ENCODE measurements at regions of chr3 and their contacts with region 1.

Region 1: DNA sequence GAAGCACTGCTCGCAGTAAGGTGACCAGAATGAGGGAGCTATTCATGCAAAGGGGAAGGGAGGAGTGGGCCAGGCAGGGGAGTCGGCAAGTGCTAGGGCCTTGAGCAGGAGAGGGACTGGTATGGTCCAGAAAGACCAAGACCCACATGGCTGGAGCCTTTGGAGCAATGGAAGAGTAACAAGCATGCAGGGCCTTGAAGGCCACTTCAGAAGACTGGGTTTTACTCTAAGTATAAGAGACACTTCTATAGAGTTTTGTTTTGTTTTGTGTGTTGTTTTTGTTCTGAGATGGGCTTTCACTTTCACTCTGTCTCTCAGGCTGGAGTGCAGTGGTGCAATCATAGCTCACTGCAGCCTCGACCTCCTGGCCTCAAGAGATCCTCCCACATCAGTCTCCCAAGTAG is 42.0 kb downstream of the BFSP2 start:
- DNase-seq: peak; percentile 79
- H3K4me3 Mint-ChIP-seq: peak overlapping the region; percentile 81
- H3K27ac Mint-ChIP-seq: peak overlapping the region; percentile 95
- H3K4me1 Mint-ChIP-seq: peaks cover 32% of the 10 kb centered on the region
- H3K27me3 Mint-ChIP-seq: no peaks in the 10 kb centered on the region

Region 2: GRCh38 chr3:133209871-133210550 is 231.9 kb before region 1 on chr3:
- intact Hi-C with region 1: loop called (anchors 1 kb)
- DNase-seq: no peak
- H3K4me3 Mint-ChIP-seq: no peak overlapping the region
- H3K27ac Mint-ChIP-seq: peak overlapping the region; percentile 8
- H3K4me1 Mint-ChIP-seq: peaks cover 18% of the 10 kb centered on the region
- H3K27me3 Mint-ChIP-seq: peaks cover 13% of the 10 kb centered on the region

Region 3: DNA sequence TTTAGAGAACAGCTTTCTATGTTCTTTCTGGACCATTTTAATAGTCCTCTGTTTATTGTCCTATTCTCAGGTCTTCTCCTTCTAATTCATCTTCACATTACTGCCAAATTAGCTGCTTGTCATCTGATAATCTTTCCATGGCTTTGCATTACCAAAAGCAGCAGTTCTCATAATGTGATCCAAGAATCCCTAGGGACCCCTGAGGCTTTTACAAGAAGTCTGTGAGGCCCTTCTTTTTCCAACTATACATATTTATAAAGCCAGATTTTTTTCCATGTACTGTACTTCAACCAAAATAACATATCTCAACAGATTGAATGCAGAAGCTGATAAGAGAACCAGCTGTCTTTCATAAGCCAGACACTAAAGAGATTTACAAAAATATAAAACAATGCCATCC is 204.5 kb before region 1 on chr3:
- intact Hi-C with region 1: no loop called
- DNase-seq: no peak
- H3K4me3 Mint-ChIP-seq: no peak overlapping the region
- H3K27ac Mint-ChIP-seq: no peak overlapping the region
- H3K4me1 Mint-ChIP-seq: no peaks in the 10 kb centered on the region
- H3K27me3 Mint-ChIP-seq: peaks cover 6% of the 10 kb centered on the region

Region 4: DNA sequence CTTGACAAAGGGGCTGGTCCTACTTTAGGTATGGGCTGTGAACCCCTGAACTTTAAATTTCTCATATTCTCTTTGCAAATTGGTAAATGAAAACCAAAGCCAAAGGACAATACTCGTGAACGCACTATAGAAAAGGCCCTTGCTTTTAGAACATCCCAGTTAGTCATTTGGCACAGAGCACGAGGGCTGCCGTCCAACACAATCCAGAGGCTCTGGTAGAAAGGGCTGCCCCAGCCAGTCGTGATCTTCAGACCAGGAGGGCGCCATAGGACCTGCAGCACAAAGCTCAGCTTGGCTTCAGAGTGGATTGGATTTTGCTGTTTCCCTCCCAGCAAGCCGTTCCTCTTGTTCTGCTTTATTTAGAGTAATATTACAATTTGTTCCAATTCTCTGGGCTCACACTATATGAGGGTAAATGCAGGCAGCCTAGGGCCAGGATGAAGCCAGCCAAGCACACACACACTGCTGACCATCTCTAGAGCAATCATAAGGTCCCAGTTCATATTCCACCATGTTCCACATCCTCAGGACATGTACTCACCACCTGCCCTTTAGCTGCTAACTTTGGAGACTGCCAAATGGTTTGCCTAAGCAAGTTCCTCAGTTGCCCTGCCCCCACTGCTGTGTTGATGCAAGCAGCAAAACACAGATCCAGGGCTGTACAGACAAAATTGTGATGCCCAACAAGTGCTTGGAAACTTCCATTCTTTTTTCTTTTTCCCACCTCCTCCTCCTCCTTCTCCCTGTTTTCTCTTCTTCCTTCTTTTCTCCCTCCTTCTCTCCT is 48.0 kb before region 1 on chr3:
- intact Hi-C with region 1: no loop called
- DNase-seq: no peak
- H3K4me3 Mint-ChIP-seq: no peak overlapping the region
- H3K27ac Mint-ChIP-seq: no peak overlapping the region
- H3K4me1 Mint-ChIP-seq: peaks cover 7% of the 10 kb centered on the region
- H3K27me3 Mint-ChIP-seq: no peaks in the 10 kb centered on the region

Region 5: DNA sequence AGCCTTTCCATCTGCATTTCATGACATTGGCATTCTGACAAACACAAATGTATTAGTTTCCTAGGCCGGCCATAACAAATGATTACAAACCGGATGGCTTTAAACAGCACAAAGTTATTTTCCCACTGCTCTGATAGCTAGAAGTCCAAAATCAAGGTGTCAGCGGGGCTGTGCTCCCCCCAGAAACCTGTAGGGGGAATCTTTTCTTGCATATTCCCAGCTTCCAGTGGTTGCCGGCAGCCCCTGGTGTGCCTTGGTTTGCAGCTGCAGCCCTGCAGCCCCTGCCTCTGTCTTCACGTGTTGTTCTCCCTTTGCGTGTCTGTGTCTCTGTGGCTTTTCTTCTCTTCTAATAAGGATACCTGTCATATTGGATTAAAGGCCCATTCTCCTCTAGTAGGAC is 52.6 kb after region 1 on chr3:
- intact Hi-C with region 1: loop called (anchors 1 kb)
- DNase-seq: no peak
- H3K4me3 Mint-ChIP-seq: no peak overlapping the region
- H3K27ac Mint-ChIP-seq: no peak overlapping the region
- H3K4me1 Mint-ChIP-seq: peaks cover 33% of the 10 kb centered on the region
- H3K27me3 Mint-ChIP-seq: no peaks in the 10 kb centered on the region